Adrenal gland (tissue), 19 donors: ENCODE measurements at regions of chr20 and their contacts with region 1.

Region 1: GRCh38 chr20:50278674-50279531 is 88.3 kb downstream of the CEBPB start:
- DNase-seq: peak; percentile 84 to 97 (median 97)
- H3K4me3 ChIP-seq: no peak overlapping the region
- H3K27ac ChIP-seq: peak overlapping the region; percentile 45 to 93 (median 79)
- H3K4me1 ChIP-seq: peaks cover 15 to 52% of the 10 kb centered on the region in 2 donors
- H3K27me3 ChIP-seq: no peaks in the 10 kb centered on the region
- CTCF ChIP-seq: peak; percentile 26 to 76 (median 70)
- POLR2A ChIP-seq: peak in 1 of 2 donors; percentile 68

Region 2: GRCh38 chr20:50194831-50195755 is 83.8 kb before region 1 on chr20:
- intact Hi-C with region 1: loop called (anchors 5 to 10 kb)
- DNase-seq: peak in 6 of 7 donors; percentile 55 to 82 (median 68)
- H3K4me3 ChIP-seq: peak overlapping the region in 1 of 4 donors; percentile 99
- H3K27ac ChIP-seq: peak overlapping the region; percentile 69 to 100 (median 98)
- H3K4me1 ChIP-seq: peaks cover 12 to 23% of the 10 kb centered on the region in 2 donors
- H3K27me3 ChIP-seq: no peaks in the 10 kb centered on the region
- CTCF ChIP-seq: no peak
- POLR2A ChIP-seq: peak; percentile 25 to 50